HepG2 (cell line): ENCODE measurements at regions of chr1 and their contacts with region 1.

Region 1: DNA sequence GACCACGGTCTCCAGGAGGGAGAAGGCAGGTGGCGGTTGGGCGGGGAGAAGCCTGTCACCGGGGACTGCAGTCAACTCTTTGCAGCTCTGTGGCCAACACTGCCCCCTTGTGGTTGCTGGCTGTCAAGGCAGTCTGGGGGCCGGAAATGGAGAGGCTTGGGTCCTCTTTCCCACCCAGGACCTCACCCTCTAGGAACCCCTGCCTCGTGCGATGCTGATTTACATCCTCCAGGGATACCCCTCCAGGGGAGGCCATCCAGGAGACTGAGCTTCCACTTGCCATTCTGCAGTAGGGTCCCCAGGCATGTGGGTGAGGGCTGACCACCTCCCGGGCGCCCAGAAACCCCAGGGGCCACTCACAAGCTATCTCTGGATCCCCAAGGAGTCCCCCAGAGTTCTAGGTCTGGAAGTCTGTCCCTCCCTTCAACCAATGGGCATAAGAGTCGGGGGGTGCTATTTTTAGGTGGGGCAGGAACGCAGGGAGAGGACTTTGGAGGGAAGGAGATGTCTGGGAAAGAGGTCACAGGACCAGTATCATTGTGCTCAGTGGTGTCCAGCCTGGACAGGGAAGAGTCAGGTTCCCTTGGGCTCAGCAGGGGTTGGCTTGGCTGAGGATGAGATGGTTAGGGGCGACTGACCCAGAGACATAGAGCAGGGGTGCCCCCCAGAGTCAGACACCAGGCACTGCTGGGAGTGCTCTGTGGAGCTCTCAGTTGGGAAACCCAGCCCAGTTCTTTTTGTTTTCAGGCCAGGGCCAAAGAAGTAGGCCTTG is 7.1 kb upstream of the GPR61 start:
- DNase-seq: peak; percentile 75
- ATAC-seq: peak; percentile 86
- H3K4me3 ChIP-seq: peak overlapping the region in 2 of 3 experiments; percentile 29 to 67; a peak in 2 of 6 replicates
- H3K27ac ChIP-seq: no peak overlapping the region
- H3K4me1 ChIP-seq: peaks cover 19% of the 10 kb centered on the region; the same call in 1 of the 2 replicates
- H3K27me3 ChIP-seq: peaks cover 8 to 46% of the 10 kb centered on the region in 2 experiments; a peak in 4 of 5 replicates
- CTCF ChIP-seq: peak; percentile 96
- EP300 ChIP-seq: no peak
- POLR2A ChIP-seq: no peak
- RAD21 ChIP-seq: peak; percentile 83

Region 2: DNA sequence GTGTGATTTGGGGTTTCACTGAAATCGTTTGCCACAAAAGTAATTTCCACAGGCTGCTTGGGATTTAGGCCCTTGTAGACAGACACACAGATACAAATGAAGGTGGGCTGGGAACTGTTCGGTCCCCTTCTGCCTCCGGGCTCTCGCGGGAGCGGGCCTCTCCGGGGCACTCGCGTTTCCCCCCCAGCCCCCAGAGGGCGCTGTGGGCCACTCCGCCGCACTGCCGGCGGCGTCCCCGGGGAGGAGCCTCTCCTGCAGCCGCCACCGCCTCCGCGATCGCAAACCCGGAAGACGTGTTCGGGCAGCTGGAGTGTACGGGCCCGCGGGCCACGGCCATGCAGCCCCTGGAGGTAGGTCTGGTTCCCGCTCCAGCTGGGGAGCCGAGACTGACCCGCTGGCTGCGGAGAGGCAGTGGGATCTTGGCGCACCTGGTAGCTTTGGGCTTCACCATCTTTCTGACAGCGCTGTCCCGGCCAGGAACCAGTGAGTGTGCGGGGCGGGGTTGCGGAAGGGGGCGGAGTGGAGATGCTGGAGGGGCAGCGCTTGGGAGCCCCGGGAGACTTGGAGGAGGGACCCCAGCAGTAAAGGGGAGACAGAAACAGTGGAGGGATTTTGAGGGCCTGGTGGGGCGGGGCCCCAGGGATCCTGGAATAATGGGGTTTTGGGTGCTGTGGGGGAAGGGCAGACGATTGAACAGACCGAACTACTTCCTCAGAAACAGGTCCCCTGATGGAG is 38.6 kb before region 1 on chr1 and contains the start of gene CYB561D1:
- CTCF ChIA-PET with region 1: interaction called, 81 read pairs
- POLR2A ChIA-PET with region 1: interaction called, 18 read pairs
- in situ Hi-C with region 1: loop called (anchors 5 kb)
- intact Hi-C with region 1: loop called (anchors 1 kb)
- DNase-seq: peak; percentile 74
- ATAC-seq: peak; percentile 91
- H3K4me3 ChIP-seq: peak within 1 kb of the TSS; percentile 91 to 98 (median 95)
- H3K27ac ChIP-seq: peak within 1 kb of the TSS; percentile 40
- H3K4me1 ChIP-seq: peaks cover 18% of the 10 kb centered on the region
- H3K27me3 ChIP-seq: no peaks in the 10 kb centered on the region
- CTCF ChIP-seq: peak; percentile 95
- EP300 ChIP-seq: no peak
- POLR2A ChIP-seq: peak; percentile 61 to 87; a peak in 3 of 4 replicates
- RAD21 ChIP-seq: peak; percentile 86
- total RNA-seq, gene CYB561D1: 3.9 and 4.1 TPM in 2 replicates

Region 3: DNA sequence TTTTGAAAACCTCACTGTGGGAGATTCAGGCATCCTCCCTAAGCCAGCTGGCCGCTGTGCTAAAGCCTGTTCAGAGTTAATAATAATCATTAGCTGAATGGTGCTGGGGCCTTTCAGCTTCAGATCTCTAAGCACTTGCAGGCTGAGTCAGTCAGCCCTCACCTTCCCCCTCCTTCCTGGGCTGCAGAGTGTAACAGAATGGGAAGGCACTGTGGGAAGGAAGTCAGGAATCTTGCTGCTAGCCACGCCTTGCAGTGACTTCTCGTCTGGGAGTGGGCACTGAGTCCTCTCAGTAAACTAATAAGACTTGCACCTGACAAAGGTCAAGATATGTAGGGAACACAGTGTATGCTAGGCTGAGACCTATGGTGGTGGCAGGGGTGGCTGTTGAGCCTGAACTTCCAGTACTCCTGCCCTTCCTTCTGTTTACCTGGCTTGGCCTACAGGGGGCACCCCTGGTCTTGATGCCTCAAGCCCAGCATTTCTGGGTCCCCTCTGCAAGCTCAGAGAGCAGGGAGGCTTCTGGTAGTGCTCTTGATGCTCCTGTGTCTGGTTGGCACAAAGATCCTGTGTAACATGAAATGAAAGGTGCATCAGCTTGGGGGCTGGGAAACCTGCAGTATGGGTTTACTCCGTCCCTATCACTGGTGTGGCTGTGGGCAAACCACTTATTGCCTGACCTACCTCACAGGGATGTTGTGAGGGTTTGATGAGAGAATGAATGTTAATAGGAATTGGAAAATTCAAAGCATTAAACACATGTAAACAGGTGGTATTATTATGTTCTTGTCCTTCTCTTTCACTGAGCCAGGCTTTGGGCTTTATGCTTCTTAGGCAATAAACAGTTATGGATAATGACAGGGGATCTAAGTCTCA is 32.7 kb before region 1 on chr1:
- CTCF ChIA-PET with region 1: interaction called, 81 read pairs
- POLR2A ChIA-PET with region 1: interaction called, 11 read pairs
- in situ Hi-C with region 1: no loop called
- intact Hi-C with region 1: loop called (anchors 1 kb)
- DNase-seq: peak; percentile 45
- ATAC-seq: peak; percentile 71
- H3K4me3 ChIP-seq: no peak overlapping the region
- H3K27ac ChIP-seq: no peak overlapping the region
- H3K4me1 ChIP-seq: peaks cover 4% of the 10 kb centered on the region
- H3K27me3 ChIP-seq: no peaks in the 10 kb centered on the region
- CTCF ChIP-seq: peak; percentile 74
- EP300 ChIP-seq: no peak
- POLR2A ChIP-seq: no peak
- RAD21 ChIP-seq: no peak